Motor neuron (in vitro differentiated cells): ENCODE measurements at regions of chr1 and their contacts with region 1.

Region 1: DNA sequence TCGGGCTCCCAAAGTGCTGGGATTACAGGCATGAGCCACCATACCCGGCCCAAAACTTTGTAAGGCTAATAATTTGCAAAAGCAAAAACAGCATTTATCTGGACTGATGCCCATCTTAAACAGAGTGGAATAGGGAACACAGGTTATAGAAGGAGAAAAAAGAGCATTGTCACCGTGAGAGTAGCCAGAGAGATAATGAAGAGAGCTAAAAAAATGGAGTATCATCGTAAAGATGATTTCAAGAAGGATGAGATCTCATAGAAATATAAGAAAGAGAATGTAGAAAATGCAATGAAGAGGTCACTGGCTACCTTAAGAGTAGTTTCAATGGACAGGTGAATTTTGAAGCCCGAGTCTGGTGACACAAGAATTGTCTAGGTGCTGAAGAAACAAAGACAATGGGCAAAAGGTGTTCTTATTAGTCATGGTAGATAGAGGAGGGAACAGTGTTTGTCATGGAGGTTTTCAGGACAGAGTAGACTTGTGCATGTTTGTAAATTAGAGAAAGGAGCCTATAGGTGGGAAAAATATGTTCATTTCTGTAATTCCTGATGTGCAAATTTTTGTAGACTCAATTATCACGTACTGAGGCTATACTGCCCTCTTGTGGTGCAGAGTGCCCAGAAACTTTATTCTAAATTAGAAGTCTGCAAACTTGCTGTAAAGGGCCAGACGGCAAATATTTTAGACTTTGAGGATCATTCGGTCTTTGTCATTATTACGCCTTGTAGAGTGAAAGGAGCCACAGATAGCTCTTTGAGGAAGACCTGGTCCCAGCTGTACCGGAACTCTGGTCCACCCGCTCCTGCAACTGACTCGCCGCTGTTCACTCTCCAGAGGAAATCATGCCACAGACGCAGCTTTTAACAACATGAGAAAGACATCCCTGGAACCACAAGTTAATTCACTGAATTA is 8.1 kb upstream of the TMEM183A start:
- ATAC-seq: peak in 3 of 8 experiments; percentile 36 to 66 (median 54)
- H3K4me3 ChIP-seq: no peak overlapping the region
- H3K27ac ChIP-seq: no peak overlapping the region
- H3K4me1 ChIP-seq: no peaks in the 10 kb centered on the region

Region 2: GRCh38 chr1:202501281-202501680 is 497.8 kb before region 1 on chr1:
- in situ Hi-C with region 1: loop called in 1 of 9 experiments (anchors 25 kb)
- ATAC-seq: peak; percentile 24 to 77 (median 60)
- H3K4me3 ChIP-seq: no peak overlapping the region
- H3K27ac ChIP-seq: no peak overlapping the region
- H3K4me1 ChIP-seq: peaks cover 0 to 2% of the 10 kb centered on the region in 2 donors

Region 3: GRCh38 chr1:202531472-202531811 is 467.7 kb before region 1 on chr1:
- in situ Hi-C with region 1: no loop called
- ATAC-seq: no peak
- H3K4me3 ChIP-seq: no peak overlapping the region
- H3K27ac ChIP-seq: no peak overlapping the region
- H3K4me1 ChIP-seq: peaks cover 6 to 26% of the 10 kb centered on the region in 2 donors

Region 4: GRCh38 chr1:202750758-202751157 is 248.3 kb before region 1 on chr1:
- in situ Hi-C with region 1: loop called in 1 of 9 experiments (anchors 25 kb)
- ATAC-seq: no peak
- H3K4me3 ChIP-seq: no peak overlapping the region
- H3K27ac ChIP-seq: no peak overlapping the region
- H3K4me1 ChIP-seq: no peaks in the 10 kb centered on the region